ENCODE measurements at regions of chr22 and their contacts with region 1.

Region 1: GRCh38 chr22:44975427-44976262 is 34.2 kb downstream of the PHF21B start:
- DNase-seq: peak; percentile 64 to 98
- H3K4me3 ChIP-seq: no peak overlapping the region
- H3K27ac ChIP-seq: no peak overlapping the region
- H3K4me1 ChIP-seq: peaks cover 0 to 27% (median 11%) of the 10 kb centered on the region in 4 experiments; a peak in 6 of 7 replicates
- H3K27me3 ChIP-seq: no peaks in the 10 kb centered on the region; a peak in 1 of 7 replicates
- CTCF ChIP-seq: peak; percentile 76 to 89 (median 87)
- EP300 ChIP-seq: peak in 1 of 2 experiments; percentile 61; a peak in 1 of 3 replicates
- POLR2A ChIP-seq: no peak
- RAD21 ChIP-seq: peak; percentile 75 to 84

Region 2: GRCh38 chr22:44956840-44957767 is 18.5 kb before region 1 on chr22:
- CTCF ChIA-PET with region 1: interaction called, 36 read pairs
- POLR2A ChIA-PET with region 1: interaction called, 37 read pairs
- DNase-seq: no peak
- H3K4me3 ChIP-seq: peak overlapping the region in 1 of 4 experiments; percentile 11; a peak in 1 of 8 replicates
- H3K27ac ChIP-seq: peak overlapping the region; percentile 30; the same call in 1 of the 2 replicates
- H3K4me1 ChIP-seq: peaks cover 3 to 53% (median 29%) of the 10 kb centered on the region in 4 experiments
- H3K27me3 ChIP-seq: no peaks in the 10 kb centered on the region
- CTCF ChIP-seq: peak in 2 of 3 experiments; percentile 45 to 52; a peak in 3 of 4 replicates
- EP300 ChIP-seq: no peak
- POLR2A ChIP-seq: no peak
- RAD21 ChIP-seq: peak in 1 of 2 experiments; percentile 10; a peak in 1 of 4 replicates

Region 3: GRCh38 chr22:44962741-44963454 is 12.7 kb before region 1 on chr22:
- CTCF ChIA-PET with region 1: interaction called, 36 read pairs
- POLR2A ChIA-PET with region 1: interaction called, 37 read pairs
- DNase-seq: no peak
- H3K4me3 ChIP-seq: no peak overlapping the region; a peak in 1 of 8 replicates
- H3K27ac ChIP-seq: no peak overlapping the region
- H3K4me1 ChIP-seq: peaks cover 0 to 34% (median 7%) of the 10 kb centered on the region in 4 experiments; a peak in 6 of 7 replicates
- H3K27me3 ChIP-seq: no peaks in the 10 kb centered on the region
- CTCF ChIP-seq: no peak
- EP300 ChIP-seq: no peak
- POLR2A ChIP-seq: no peak
- RAD21 ChIP-seq: no peak

Region 4: GRCh38 chr22:44988671-44989070 is 13.0 kb after region 1 on chr22:
- CTCF ChIA-PET with region 1: interaction called, 8 read pairs
- POLR2A ChIA-PET with region 1: interaction called, 224 read pairs
- DNase-seq: no peak
- H3K4me3 ChIP-seq: no peak overlapping the region
- H3K27ac ChIP-seq: no peak overlapping the region
- H3K4me1 ChIP-seq: peaks cover 0 to 7% (median 0%) of the 10 kb centered on the region in 4 experiments; a peak in 1 of 7 replicates
- H3K27me3 ChIP-seq: no peaks in the 10 kb centered on the region
- CTCF ChIP-seq: peak in 1 of 3 experiments; percentile 1; a peak in 1 of 4 replicates
- EP300 ChIP-seq: no peak
- POLR2A ChIP-seq: no peak
- RAD21 ChIP-seq: peak in 1 of 2 experiments; percentile 17; a peak in 1 of 4 replicates

Region 5: DNA sequence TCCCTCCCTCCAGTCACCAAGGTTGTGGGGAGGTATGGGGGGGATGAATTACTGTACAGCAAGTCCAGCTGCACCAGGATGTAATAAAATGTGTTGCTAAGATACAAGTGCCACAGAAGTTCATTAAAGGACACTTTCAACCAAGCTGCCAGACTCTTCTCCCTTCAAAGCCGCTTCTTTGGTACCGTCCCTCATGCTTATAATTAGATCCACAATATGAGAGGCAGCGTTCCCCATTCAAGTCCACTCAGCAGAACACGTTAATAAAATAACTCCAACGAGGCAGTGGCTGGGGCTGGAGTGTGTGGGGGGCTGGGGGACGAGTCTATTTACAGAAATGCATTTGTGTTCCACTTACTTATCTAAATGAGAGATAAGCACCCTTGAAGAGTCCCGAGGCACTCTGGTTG is 19.5 kb after region 1 on chr22:
- CTCF ChIA-PET with region 1: interaction called, 8 read pairs
- POLR2A ChIA-PET with region 1: interaction called, 224 read pairs
- DNase-seq: no peak
- H3K4me3 ChIP-seq: no peak overlapping the region
- H3K27ac ChIP-seq: no peak overlapping the region
- H3K4me1 ChIP-seq: peaks cover 0 to 21% (median 6%) of the 10 kb centered on the region in 4 experiments; a peak in 6 of 7 replicates
- H3K27me3 ChIP-seq: no peaks in the 10 kb centered on the region
- CTCF ChIP-seq: no peak
- EP300 ChIP-seq: no peak
- POLR2A ChIP-seq: no peak
- RAD21 ChIP-seq: no peak

Region 6: DNA sequence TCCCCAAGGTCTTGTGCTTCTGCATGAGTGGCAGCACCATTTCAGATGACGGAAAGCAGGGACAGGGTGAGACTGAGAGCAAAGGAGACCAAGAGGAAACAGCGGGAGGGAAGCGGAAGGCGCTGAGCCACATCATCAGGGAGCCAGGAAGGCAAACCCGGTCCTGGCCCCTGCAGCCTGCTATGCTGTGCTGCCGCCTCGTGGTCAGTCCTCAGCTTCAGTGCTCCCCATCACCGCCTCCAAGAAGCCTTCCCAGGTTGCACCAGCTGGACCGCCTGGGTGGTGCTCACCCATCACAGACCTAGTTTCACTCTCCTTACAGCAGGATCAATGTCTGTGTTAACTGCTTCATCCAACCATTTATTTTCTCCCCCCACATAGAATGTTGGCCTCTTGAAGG is 107.2 kb after region 1 on chr22:
- CTCF ChIA-PET with region 1: interaction called, 34 read pairs
- POLR2A ChIA-PET with region 1: interaction called, 6 read pairs
- DNase-seq: peak in 1 of 2 experiments; percentile 81
- H3K4me3 ChIP-seq: no peak overlapping the region
- H3K27ac ChIP-seq: no peak overlapping the region
- H3K4me1 ChIP-seq: peaks cover 0 to 6% (median 2%) of the 10 kb centered on the region in 4 experiments; a peak in 2 of 7 replicates
- H3K27me3 ChIP-seq: peaks cover 0 to 3% (median 0%) of the 10 kb centered on the region in 4 experiments; a peak in 1 of 7 replicates
- CTCF ChIP-seq: peak; percentile 76 to 92 (median 80)
- EP300 ChIP-seq: no peak
- POLR2A ChIP-seq: no peak
- RAD21 ChIP-seq: peak; percentile 89 to 94

Region 7: GRCh38 chr22:45096256-45096907 is 120.7 kb after region 1 on chr22:
- CTCF ChIA-PET with region 1: interaction called, 12 read pairs
- POLR2A ChIA-PET with region 1: interaction called, 4 read pairs
- DNase-seq: peak in 1 of 2 experiments; percentile 81
- H3K4me3 ChIP-seq: no peak overlapping the region
- H3K27ac ChIP-seq: no peak overlapping the region
- H3K4me1 ChIP-seq: peaks cover 0 to 4% (median 0%) of the 10 kb centered on the region in 4 experiments; a peak in 2 of 7 replicates
- H3K27me3 ChIP-seq: no peaks in the 10 kb centered on the region
- CTCF ChIP-seq: peak; percentile 64 to 91 (median 86)
- EP300 ChIP-seq: no peak
- POLR2A ChIP-seq: no peak
- RAD21 ChIP-seq: peak; percentile 81 to 86

Measured in H1 (cell line).